ENCODE measurements at regions of chr5 and their contacts with region 1.

Region 1: GRCh38 chr5:3375586-3376311 is 219.9 kb upstream of the IRX1 start:
- DNase-seq: no peak
- ATAC-seq: no peak

Region 2: DNA sequence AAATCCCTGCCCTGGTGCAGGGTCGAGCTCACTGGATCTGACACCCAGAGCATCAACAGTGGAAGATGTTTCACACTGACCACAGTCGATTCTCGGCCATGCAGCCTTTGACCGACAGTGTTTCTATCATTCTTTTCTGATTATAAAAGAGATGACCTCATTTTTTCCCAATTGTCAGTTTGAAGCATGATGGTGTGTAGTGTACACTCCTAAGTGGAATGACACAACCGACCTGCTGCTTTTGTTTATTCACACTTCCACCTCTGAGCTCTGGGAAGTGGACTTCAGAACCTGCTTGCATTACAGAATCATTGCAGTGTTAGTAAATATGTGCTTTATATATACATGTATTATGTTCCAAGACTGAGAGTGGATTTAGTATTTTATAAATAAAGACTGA is 752.9 kb before region 1 on chr5:
- intact Hi-C with region 1: loop called (anchors 5 kb)
- DNase-seq: no peak
- ATAC-seq: no peak

Region 3: GRCh38 chr5:3475674-3476073 is 99.9 kb after region 1 on chr5:
- intact Hi-C with region 1: no loop called
- DNase-seq: no peak
- ATAC-seq: no peak